Upper lobe of right lung (tissue), 1 donor: ENCODE measurements at regions of chr12 and their contacts with region 1.

Region 1: DNA sequence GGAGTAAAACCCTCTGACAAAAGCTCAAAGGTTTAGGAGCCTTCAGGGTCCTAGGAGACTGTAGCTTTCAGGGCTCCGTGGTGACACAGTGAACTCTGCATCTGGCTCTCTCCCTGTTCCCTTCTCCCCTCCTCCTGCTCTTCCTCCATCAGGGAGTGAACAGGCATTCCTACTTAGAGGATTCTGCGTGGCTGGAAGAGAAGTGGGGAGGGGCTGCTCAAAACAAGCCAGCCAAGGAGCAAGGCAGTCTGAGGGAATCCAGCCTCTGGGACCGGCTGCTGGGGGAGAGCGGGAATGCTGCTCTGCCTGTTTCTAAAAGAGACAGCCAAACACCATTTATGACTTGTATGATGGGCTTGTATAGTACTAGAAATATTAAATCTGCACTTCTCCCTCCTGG is 49.5 kb downstream of the RBMS2 start:
- DNase-seq: no peak
- ATAC-seq: peak; percentile 34
- H3K4me3 ChIP-seq: peak overlapping the region; percentile 19
- H3K27ac ChIP-seq: peak overlapping the region; percentile 76
- H3K4me1 ChIP-seq: peaks cover 62% of the 10 kb centered on the region
- H3K27me3 ChIP-seq: no peaks in the 10 kb centered on the region
- CTCF ChIP-seq: no peak

Region 2: GRCh38 chr12:56469007-56469930 is 101.9 kb before region 1 on chr12:
- intact Hi-C with region 1: no loop called
- DNase-seq: no peak
- ATAC-seq: peak; percentile 25
- H3K4me3 ChIP-seq: peak overlapping the region; percentile 99
- H3K27ac ChIP-seq: peak overlapping the region; percentile 95
- H3K4me1 ChIP-seq: peaks cover 12% of the 10 kb centered on the region
- H3K27me3 ChIP-seq: no peaks in the 10 kb centered on the region
- CTCF ChIP-seq: no peak

Region 3: DNA sequence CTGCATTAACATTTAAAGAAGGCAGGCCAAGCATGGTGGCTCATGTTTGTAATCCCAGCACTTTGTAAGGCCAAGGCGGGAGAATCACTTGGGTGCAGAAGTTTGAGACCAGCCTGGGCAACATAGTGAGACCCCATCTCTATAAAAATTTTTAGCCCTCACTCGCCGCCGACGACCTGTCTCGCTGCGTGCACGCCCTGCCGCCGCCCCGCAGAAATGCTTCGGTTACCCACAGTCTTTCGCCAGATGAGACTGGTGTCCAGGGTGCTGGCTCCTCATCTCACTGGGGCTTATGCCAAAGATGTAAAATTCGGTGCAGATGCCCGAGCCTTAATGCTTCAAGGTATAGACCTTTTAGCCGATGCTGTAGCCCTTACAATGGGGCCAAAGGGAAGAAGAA is 60.3 kb before region 1 on chr12:
- intact Hi-C with region 1: loop called (anchors 5 kb)
- DNase-seq: no peak
- ATAC-seq: no peak
- H3K4me3 ChIP-seq: no peak overlapping the region
- H3K27ac ChIP-seq: no peak overlapping the region
- H3K4me1 ChIP-seq: no peaks in the 10 kb centered on the region
- H3K27me3 ChIP-seq: no peaks in the 10 kb centered on the region
- CTCF ChIP-seq: no peak

Region 4: DNA sequence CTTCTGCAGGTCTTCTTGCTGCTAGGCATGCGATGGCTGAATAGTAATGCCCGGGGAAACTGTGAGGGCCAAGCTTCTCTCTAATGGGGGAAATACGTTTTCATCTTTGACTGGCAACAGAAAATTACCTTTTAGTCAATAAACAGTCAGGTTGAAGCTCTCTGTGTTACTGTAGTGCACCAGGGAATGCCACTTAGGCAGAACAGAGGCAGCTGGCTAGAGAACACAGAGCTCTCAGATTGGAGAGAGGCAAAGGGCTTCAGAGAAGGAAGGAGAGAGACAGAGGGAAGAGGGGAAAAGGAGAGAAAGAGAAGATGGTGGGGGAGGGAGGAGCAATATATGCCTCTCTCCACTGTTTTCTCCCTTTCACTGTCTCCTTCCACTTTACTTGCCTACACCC is 198.7 kb after region 1 on chr12:
- intact Hi-C with region 1: no loop called
- DNase-seq: no peak
- ATAC-seq: peak; percentile 43
- H3K4me3 ChIP-seq: no peak overlapping the region
- H3K27ac ChIP-seq: peak overlapping the region; percentile 65
- H3K4me1 ChIP-seq: peaks cover 5% of the 10 kb centered on the region
- H3K27me3 ChIP-seq: no peaks in the 10 kb centered on the region
- CTCF ChIP-seq: no peak

Region 5: GRCh38 chr12:56785141-56785865 is 214.2 kb after region 1 on chr12:
- intact Hi-C with region 1: no loop called
- DNase-seq: no peak
- ATAC-seq: peak; percentile 57
- H3K4me3 ChIP-seq: no peak overlapping the region
- H3K27ac ChIP-seq: no peak overlapping the region
- H3K4me1 ChIP-seq: no peaks in the 10 kb centered on the region
- H3K27me3 ChIP-seq: no peaks in the 10 kb centered on the region
- CTCF ChIP-seq: no peak